ENCODE measurements at regions of chr7 and their contacts with region 1.

Region 1: GRCh38 chr7:95527033-95527775 is 41.5 kb downstream of the ASB4 start:
- DNase-seq: peak; percentile 18
- H3K4me3 Mint-ChIP-seq: no peak overlapping the region
- H3K27ac Mint-ChIP-seq: no peak overlapping the region
- H3K4me1 Mint-ChIP-seq: no peaks in the 10 kb centered on the region
- H3K27me3 Mint-ChIP-seq: peaks cover 18% of the 10 kb centered on the region

Region 2: DNA sequence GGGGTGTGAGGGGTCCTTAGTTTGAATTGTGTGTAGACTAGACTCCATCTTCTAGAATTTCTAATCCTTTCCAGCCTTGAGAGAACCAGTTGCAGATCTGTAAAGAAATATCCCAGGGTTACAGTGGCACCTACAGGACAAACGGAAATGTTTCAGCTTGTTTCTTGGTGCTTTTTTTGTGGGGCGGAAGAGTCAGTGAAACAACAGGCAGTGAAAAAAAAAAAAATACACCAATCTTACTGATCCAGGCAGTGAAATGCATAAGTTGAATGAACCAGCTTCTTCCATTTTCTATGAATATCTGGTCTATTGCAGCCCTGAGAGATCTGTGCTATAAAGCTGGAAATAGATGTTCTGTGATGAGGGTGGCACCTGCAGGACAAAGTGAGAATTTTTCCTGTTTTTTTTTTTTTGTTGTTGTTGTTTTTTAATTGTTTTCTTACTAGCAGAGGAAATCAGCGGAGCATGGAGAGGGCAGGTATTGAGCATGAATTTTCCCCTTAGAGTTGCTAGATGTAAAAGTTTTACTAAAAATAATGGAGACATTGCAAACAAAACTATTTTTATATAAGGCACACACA is 163.3 kb after region 1 on chr7:
- CTCF ChIA-PET with region 1: interaction called, 17 read pairs
- POLR2A ChIA-PET with region 1: no interaction called
- DNase-seq: no peak
- H3K4me3 Mint-ChIP-seq: no peak overlapping the region
- H3K27ac Mint-ChIP-seq: no peak overlapping the region
- H3K4me1 Mint-ChIP-seq: no peaks in the 10 kb centered on the region
- H3K27me3 Mint-ChIP-seq: peaks cover 3% of the 10 kb centered on the region